Heart right ventricle (tissue), 16 donors: ENCODE measurements at regions of chr5 and their contacts with region 1.

Region 1: GRCh38 chr5:116788851-116789403 is 214.3 kb upstream of the SEMA6A start:
- DNase-seq: peak in 1 of 2 donors; percentile 63
- ATAC-seq: peak; percentile 89 to 99 (median 96)
- H3K4me3 ChIP-seq: no peak overlapping the region
- H3K27ac ChIP-seq: peak overlapping the region in 7 of 10 donors; percentile 38 to 68 (median 58)
- H3K4me1 ChIP-seq: peaks cover 0 to 18% (median 5%) of the 10 kb centered on the region in 9 donors
- H3K27me3 ChIP-seq: no peaks in the 10 kb centered on the region
- CTCF ChIP-seq: no peak

Region 2: GRCh38 chr5:116574367-116575325 is 214.3 kb before region 1 on chr5 and contains the start of gene SEMA6A:
- intact Hi-C with region 1: loop called in 4 of 10 experiments (anchors 5 kb)
- DNase-seq: peak; percentile 92 to 93
- ATAC-seq: peak; percentile 86 to 95 (median 89)
- H3K4me3 ChIP-seq: peak within 1 kb of the TSS; percentile 54 to 85 (median 72)
- H3K27ac ChIP-seq: peak within 1 kb of the TSS; percentile 51 to 91 (median 80)
- H3K4me1 ChIP-seq: peaks cover 0 to 61% (median 38%) of the 10 kb centered on the region in 9 donors
- H3K27me3 ChIP-seq: peaks cover 0 to 80% (median 20%) of the 10 kb centered on the region in 7 donors
- CTCF ChIP-seq: peak in 3 of 9 donors; percentile 12 to 27 (median 13)
- total RNA-seq, gene SEMA6A: 2.9 to 11.3 (median 8.3) TPM

Region 3: GRCh38 chr5:116671211-116671736 is 117.7 kb before region 1 on chr5:
- intact Hi-C with region 1: loop called in 1 of 10 experiments (anchors 10 kb)
- DNase-seq: no peak
- ATAC-seq: no peak
- H3K4me3 ChIP-seq: no peak overlapping the region
- H3K27ac ChIP-seq: no peak overlapping the region
- H3K4me1 ChIP-seq: peaks cover 0 to 21% (median 11%) of the 10 kb centered on the region in 9 donors
- H3K27me3 ChIP-seq: no peaks in the 10 kb centered on the region
- CTCF ChIP-seq: no peak

Region 4: GRCh38 chr5:116738239-116738614 is 50.7 kb before region 1 on chr5:
- intact Hi-C with region 1: no loop called
- DNase-seq: peak in 1 of 2 donors; percentile 20
- ATAC-seq: peak in 3 of 8 donors; percentile 6 to 44 (median 34)
- H3K4me3 ChIP-seq: no peak overlapping the region
- H3K27ac ChIP-seq: peak overlapping the region in 1 of 10 donors; percentile 19
- H3K4me1 ChIP-seq: peaks cover 2 to 45% (median 27%) of the 10 kb centered on the region in 9 donors
- H3K27me3 ChIP-seq: no peaks in the 10 kb centered on the region
- CTCF ChIP-seq: no peak